IMR-90 (cell line): ENCODE measurements at regions of chr16 and their contacts with region 1.

Region 1: GRCh38 chr16:69123910-69124309 is 8.5 kb downstream of the CHTF8 start:
- DNase-seq: peak; percentile 76
- ATAC-seq: peak; percentile 81
- H3K4me3 ChIP-seq: no peak overlapping the region
- H3K27ac ChIP-seq: no peak overlapping the region
- H3K4me1 ChIP-seq: no peaks in the 10 kb centered on the region
- H3K27me3 ChIP-seq: no peaks in the 10 kb centered on the region
- CTCF ChIP-seq: peak; percentile 81
- POLR2A ChIP-seq: 0 out of 2 replicates have a peak, but pooled peaks have one; percentile 30
- RAD21 ChIP-seq: peak; percentile 86

Region 2: DNA sequence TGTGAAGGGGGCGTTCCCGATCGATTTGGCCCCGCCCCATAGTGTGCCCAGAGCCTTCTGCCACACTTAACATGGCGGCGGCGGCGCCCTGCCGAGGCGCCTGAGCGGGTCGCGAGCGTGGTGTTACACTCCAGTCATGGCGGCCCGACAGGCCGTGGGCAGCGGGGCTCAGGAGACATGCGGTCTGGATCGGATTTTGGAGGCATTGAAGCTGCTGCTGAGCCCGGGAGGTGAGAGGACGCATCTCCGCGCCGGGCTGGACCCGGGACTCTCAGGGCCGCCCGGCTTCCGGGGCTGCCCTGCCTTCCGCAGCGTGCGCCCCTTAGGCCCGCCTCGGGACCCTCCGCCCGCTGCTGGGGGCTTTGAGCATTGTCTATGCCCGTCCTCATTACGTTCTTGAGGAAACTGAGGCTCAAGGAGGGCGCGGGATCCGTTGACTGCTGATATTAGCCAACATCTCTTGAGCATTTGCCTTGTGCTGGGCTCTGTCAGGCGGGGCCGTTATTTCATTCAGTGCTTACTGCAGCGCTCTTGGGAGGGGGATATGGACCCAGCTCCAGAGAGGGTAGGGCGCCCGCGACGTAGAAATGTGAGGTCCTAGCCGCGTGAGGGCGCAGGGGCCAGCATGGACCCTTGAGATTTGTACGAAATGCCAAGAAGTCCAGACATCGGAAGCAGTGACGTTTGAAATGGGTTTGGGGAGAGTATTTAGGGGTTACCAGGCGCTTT is 280.3 kb before region 1 on chr16 and contains the start of gene TANGO6:
- CTCF ChIA-PET with region 1: interaction called, 5 read pairs
- POLR2A ChIA-PET with region 1: no interaction called
- dilution Hi-C with region 1: no loop called
- in situ Hi-C with region 1: loop called (anchors 5 kb)
- intact Hi-C with region 1: loop called (anchors 1 kb)
- DNase-seq: peak; percentile 68
- ATAC-seq: peak; percentile 95
- H3K4me3 ChIP-seq: peak within 1 kb of the TSS; percentile 89
- H3K27ac ChIP-seq: peak within 1 kb of the TSS; percentile 95
- H3K4me1 ChIP-seq: peaks cover 3% of the 10 kb centered on the region; the same call in 1 of the 2 replicates
- H3K27me3 ChIP-seq: no peaks in the 10 kb centered on the region
- CTCF ChIP-seq: peak; percentile 39
- POLR2A ChIP-seq: peak; percentile 71
- RAD21 ChIP-seq: peak; percentile 35; the same call in 1 of the 2 replicates
- total RNA-seq, gene TANGO6: 19.7 and 22.4 TPM in 2 replicates

Region 3: DNA sequence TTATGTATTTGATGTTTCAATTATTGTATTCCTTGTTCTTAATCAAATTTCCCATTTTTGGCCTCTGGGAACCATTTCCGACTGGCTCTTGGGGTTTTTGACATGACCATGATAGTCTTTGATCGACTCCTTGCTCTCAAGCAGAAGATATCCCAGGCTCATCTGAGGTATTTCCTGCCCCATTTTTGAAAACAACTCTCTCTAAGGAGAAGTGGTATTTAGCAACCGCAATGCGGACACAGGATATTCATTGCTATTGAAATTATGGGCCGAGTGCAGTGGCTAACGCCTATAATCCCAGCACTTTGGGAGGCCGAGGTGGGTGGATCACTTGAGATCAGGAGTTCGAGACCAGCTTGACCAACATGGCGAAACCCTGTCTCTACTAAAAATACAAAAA is 275.1 kb before region 1 on chr16:
- CTCF ChIA-PET with region 1: interaction called, 5 read pairs
- POLR2A ChIA-PET with region 1: no interaction called
- dilution Hi-C with region 1: no loop called
- in situ Hi-C with region 1: loop called (anchors 5 kb)
- intact Hi-C with region 1: loop called (anchors 1 kb)
- DNase-seq: no peak
- ATAC-seq: no peak
- H3K4me3 ChIP-seq: no peak overlapping the region
- H3K27ac ChIP-seq: no peak overlapping the region
- H3K4me1 ChIP-seq: peaks cover 3% of the 10 kb centered on the region; the same call in 1 of the 2 replicates
- H3K27me3 ChIP-seq: no peaks in the 10 kb centered on the region
- CTCF ChIP-seq: no peak
- POLR2A ChIP-seq: no peak
- RAD21 ChIP-seq: no peak